ENCODE measurements at regions of chr7 and their contacts with region 1.

Region 1: DNA sequence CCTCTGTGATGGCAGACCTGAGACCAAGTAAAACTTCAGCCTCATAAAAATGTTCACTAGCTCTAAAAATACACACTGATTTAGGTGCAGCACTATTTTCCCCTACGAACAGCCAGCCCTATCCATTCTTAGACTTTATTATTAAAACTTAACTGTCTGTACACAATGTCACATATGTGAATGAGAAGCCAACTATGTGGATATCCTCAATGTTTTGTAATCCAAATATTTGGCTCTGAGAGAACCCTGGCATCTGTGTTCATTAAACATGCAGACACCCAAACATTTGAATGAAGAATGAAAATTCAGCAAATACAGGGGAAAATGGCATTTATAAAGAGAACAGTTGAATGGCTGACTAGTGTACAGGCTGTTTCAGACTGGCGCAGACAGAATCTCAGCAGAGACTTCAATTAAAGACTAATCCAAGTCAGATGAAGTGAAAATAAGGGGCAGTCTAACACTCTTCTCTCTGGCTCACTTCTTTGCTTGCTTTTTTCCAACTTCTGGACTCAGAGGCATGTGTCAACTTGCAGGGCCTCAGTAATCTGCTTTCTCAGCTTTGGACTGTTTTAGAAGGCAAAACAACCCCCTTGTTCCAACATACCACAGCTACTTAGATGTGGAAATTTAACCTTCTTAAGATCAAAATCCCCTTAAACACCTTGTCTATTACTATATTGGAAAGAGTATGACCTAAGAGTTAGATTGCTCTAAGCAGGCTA is 47.4 kb upstream of the FAM180A start:
- DNase-seq: no peak
- ATAC-seq: peak in 1 of 2 donors; percentile 28
- H3K4me3 ChIP-seq: no peak overlapping the region
- H3K27ac ChIP-seq: no peak overlapping the region
- H3K4me1 ChIP-seq: no peaks in the 10 kb centered on the region
- H3K27me3 ChIP-seq: no peaks in the 10 kb centered on the region

Region 2: GRCh38 chr7:135684136-135684535 is 111.9 kb before region 1 on chr7:
- intact Hi-C with region 1: loop called in 2 of 4 experiments (anchors 10 kb)
- DNase-seq: no peak
- ATAC-seq: peak in 1 of 2 donors; percentile 25
- H3K4me3 ChIP-seq: no peak overlapping the region
- H3K27ac ChIP-seq: no peak overlapping the region
- H3K4me1 ChIP-seq: peaks cover 13% of the 10 kb centered on the region
- H3K27me3 ChIP-seq: no peaks in the 10 kb centered on the region